ENCODE measurements at regions of chr1 and their contacts with region 1.

Region 1: DNA sequence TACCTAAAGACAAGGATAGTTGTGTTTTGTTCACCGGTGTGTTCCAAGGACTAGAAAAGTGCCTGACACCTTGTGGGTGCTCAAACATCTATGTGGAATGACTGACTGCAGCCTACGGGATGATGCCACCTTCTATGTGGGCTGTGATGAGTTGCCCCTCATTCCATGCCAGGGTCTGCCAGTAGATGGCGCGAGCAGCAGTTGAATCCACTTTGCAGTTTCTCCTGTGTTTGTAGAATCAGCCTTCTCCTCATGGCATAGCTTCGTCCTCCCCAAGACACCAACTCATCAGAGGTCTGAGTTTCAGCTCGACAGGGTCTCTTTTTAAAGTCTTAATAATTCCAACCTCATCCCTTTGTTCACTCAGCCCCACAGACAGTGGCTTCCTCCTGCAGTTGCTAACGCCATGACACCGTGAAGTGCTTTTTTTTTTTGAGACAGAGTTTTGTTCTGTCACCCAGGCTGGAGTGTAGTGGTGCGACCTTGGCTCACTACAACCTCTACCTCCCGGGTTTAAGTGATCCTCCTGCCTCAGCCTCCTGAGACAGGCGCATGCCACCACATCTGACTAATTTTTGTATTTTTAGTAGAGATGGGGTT is 133.7 kb downstream of the CAPN8 start:
- DNase-seq: no peak

Region 2: GRCh38 chr1:223521150-223521549 is 10.7 kb before region 1 on chr1:
- intact Hi-C with region 1: loop called in 1 of 2 experiments (anchors 1 kb)
- DNase-seq: no peak